ENCODE measurements at regions of chr20 and their contacts with region 1.

Region 1: DNA sequence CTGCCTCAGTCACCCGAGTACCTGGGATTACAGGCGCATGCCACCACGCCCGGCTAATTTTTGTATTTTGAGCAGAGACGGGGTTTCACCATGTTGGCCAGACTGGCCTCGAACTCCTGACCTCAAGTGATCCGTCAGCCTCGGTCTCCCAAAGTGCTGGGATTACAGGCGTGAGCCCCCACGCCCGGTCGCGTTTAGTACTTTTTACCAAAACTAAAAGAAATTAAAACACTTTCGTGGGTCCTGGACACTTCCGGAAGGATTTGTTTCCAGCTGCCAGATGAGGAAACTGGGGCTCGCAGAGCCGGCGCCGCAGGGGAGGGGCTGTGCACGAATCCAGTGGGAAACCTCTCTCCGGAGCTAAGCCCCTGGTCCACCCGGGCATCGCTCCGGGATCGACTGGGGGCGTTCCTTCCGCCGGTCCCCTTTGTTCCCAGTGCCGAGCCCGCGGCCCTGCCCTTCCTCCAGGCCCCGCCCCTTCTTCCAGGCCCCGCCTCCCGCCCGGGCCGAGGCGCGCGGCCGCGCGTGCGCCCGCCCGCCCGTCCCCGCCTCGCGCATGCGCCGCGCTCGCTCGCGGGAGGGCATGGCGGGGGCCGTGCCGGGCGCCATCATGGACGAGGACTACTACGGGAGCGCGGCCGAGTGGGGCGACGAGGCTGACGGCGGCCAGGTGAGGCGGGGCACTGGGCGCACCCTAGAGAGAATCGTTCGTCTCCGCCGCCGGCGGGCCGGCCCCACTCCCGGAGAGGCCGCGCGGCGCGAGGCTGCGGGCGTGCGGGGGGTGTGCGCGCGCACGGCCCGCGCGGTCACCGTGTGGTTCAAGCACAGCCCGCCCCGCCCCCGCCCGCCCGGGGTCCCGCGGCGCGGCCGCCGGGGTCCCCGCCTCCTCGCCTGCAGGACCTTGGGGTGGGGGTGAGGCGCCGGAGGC is at the start of gene NELFCD:
- DNase-seq: peak; percentile 92 to 97
- ATAC-seq: peak; percentile 94
- H3K4me3 ChIP-seq: peak within 1 kb of the TSS; percentile 80 to 87
- H3K27ac ChIP-seq: no peak within 1 kb of the TSS
- H3K4me1 ChIP-seq: peaks cover 0 to 4% of the 10 kb centered on the region in 2 donors
- H3K27me3 ChIP-seq: no peaks in the 10 kb centered on the region
- total RNA-seq, gene NELFCD: 40.5 to 50.1 TPM

Region 2: DNA sequence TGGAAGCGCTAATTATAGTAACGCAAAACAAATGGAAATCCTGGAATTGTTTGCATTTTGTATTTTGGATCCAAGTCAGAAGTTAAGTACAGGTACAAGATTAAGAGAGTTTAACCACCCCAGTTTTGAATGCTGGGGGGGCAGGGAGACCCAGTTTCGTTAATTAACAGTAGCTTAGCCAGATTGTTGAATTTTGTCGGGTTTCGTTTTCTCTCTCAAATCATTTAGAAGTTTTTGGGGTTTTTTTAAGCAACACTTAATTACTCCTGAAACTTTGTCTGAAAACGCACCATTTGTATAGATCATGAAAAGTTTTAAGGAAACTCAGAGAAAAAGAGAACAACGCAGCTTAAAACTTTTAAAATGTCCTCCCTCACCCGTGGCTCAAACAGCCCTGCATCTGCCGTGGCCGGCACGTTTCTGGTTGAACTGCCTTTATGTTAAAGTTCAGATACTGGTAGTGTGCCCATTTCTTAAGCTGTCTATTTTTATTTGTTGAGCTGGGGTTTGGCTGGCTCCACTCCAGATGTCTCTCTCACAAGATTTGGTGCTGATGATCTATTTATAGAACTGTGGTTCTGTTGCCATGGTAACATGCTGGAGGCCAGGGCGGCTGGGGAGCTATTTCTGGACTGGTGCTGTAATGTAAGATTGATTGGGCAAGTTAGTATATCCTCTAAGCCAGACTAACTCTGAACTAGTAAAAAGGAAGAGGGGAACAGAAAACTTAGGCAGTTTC is 73.4 kb before region 1 on chr20:
- intact Hi-C with region 1: loop called (anchors 5 kb)
- DNase-seq: peak; percentile 89 to 94
- ATAC-seq: peak; percentile 95
- H3K4me3 ChIP-seq: no peak overlapping the region
- H3K27ac ChIP-seq: peak overlapping the region; percentile 54 to 88
- H3K4me1 ChIP-seq: no peaks in the 10 kb centered on the region
- H3K27me3 ChIP-seq: no peaks in the 10 kb centered on the region

Region 3: GRCh38 chr20:59042796-59043660 is 62.1 kb after region 1 on chr20:
- intact Hi-C with region 1: loop called (anchors 2 to 5 kb)
- DNase-seq: peak; percentile 96 to 98
- ATAC-seq: peak; percentile 98
- H3K4me3 ChIP-seq: peak overlapping the region; percentile 51 to 88
- H3K27ac ChIP-seq: peak overlapping the region in 1 of 2 donors; percentile 48
- H3K4me1 ChIP-seq: no peaks in the 10 kb centered on the region
- H3K27me3 ChIP-seq: no peaks in the 10 kb centered on the region

Measured in aorta (tissue), 5 donors.